Activated T-helper 2 cell treated with anti-CD3 and anti-CD28 coated beads, Interferon-gamma antibody, Interleukin-2, Interleukin-4, amounts not matched to agents 10 μg/mL and 5 μg/mL and 100 μg/mL, durations not matched to agents 14 hours and 24 hours and 36 hours (primary cell): ENCODE measurements at regions of chr16 and their contacts with region 1.

Region 1: GRCh38 chr16:71894921-71895678 is at the start of gene IST1:
- DNase-seq: peak; percentile 97
- H3K4me3 Mint-ChIP-seq: peak within 1 kb of the TSS; percentile 95
- H3K27ac Mint-ChIP-seq: peak within 1 kb of the TSS; percentile 98
- H3K4me1 Mint-ChIP-seq: peaks cover 13% of the 10 kb centered on the region
- H3K27me3 Mint-ChIP-seq: no peaks in the 10 kb centered on the region
- total RNA-seq, gene IST1: 158 and 167 TPM in 2 replicates

Region 2: DNA sequence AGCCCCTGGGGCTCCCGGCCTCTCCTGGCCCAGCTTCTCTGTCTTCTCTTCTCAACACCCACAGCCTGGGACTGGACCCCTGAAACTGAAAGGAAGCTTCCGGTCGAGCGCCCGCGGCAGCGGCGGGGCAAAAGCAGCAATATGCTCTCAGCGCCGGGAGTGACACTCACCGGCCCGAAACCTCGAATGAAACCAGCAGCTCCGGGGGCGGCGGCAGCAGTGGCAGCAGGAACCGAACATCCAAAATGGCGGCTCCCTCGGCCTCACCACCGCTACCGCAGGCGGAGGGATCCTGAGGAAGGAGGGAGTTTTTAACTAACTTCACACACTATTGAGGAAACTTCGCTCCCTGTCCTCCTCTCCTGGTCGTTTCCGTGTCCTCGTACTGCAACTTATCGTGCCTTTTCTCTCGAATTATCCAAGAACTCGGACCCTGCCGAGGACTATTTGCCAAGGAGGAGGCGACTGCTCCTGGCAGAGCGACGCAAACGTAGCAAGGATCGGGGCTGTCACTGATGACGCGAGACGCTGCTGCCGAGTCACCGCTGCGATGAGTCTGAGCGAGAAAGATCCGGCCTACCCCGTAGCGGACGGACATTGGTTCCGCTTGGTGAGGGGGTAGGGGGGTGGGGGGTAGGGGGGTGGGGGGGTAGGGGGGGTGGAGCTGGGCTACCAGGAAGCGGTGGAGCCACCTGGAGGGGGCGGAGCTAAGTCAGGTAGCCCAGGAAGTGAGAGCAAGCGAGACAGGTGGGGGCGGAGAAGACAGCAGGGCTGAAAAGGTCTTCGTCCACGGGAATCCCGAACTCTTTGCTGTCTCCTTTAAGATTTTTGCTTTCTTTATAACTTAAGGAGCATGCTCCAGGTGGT is 86.3 kb before region 1 on chr16 and contains the start of gene AP1G1:
- intact Hi-C with region 1: loop called (anchors 1 kb)
- DNase-seq: peak; percentile 91
- H3K4me3 Mint-ChIP-seq: peak within 1 kb of the TSS; percentile 95
- H3K27ac Mint-ChIP-seq: peak within 1 kb of the TSS; percentile 100
- H3K4me1 Mint-ChIP-seq: peaks cover 16% of the 10 kb centered on the region
- H3K27me3 Mint-ChIP-seq: no peaks in the 10 kb centered on the region
- total RNA-seq, gene AP1G1: 90.6 and 91.6 TPM in 2 replicates

Region 3: GRCh38 chr16:71845639-71846430 is 49.3 kb before region 1 on chr16 and contains the start of gene ATXN1L:
- intact Hi-C with region 1: loop called (anchors 1 kb)
- DNase-seq: peak; percentile 92
- H3K4me3 Mint-ChIP-seq: peak within 1 kb of the TSS; percentile 89
- H3K27ac Mint-ChIP-seq: peak within 1 kb of the TSS; percentile 94
- H3K4me1 Mint-ChIP-seq: peaks cover 27% of the 10 kb centered on the region
- H3K27me3 Mint-ChIP-seq: no peaks in the 10 kb centered on the region
- total RNA-seq, gene ATXN1L: 17.2 and 19.7 TPM in 2 replicates

Region 4: DNA sequence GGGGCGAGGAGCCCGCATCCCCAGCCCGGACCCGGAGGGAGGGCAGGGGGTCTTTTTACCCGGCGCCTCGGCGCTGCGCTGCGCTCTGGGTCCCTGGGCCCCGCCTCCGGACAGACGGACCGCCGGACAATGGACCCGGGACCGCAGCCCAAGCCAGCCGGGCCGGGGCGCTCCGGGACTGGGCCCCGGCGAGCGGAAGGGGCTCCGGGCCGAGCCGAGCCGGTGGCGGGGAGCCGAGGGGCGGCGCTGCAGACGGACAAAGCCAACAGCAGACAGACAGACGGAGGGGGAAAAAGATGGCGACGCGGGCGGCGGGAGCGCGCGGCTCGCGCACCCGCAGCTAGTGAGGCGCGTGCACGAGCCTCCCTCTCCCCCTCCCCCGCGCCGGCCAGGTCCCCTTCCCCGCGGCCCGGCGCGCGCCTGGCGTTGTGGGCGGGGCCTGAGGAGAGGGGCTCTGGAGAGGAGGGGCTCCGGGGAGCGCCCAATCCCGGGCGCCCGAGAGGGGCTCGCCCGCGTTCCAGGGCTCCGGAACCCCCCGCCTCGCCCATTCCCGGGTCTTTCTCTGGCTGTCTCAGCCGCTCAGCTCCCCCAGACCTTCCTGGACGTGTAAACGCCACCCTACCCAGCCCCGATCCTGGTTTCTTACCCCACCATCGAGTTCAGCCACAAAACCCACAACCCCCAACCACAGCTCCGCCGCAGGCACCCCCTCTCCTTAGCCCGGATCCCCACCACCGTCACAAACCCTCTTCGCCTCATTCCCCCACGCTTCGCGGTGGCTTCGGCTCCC is 11.1 kb before region 1 on chr16 and contains the start of gene ZNF821:
- intact Hi-C with region 1: loop called (anchors 1 kb)
- DNase-seq: peak; percentile 68
- H3K4me3 Mint-ChIP-seq: peak within 1 kb of the TSS; percentile 96
- H3K27ac Mint-ChIP-seq: peak within 1 kb of the TSS; percentile 95
- H3K4me1 Mint-ChIP-seq: peaks cover 45% of the 10 kb centered on the region
- H3K27me3 Mint-ChIP-seq: peaks cover 9% of the 10 kb centered on the region
- total RNA-seq, gene ZNF821: 7.9 and 9.2 TPM in 2 replicates

Region 5: DNA sequence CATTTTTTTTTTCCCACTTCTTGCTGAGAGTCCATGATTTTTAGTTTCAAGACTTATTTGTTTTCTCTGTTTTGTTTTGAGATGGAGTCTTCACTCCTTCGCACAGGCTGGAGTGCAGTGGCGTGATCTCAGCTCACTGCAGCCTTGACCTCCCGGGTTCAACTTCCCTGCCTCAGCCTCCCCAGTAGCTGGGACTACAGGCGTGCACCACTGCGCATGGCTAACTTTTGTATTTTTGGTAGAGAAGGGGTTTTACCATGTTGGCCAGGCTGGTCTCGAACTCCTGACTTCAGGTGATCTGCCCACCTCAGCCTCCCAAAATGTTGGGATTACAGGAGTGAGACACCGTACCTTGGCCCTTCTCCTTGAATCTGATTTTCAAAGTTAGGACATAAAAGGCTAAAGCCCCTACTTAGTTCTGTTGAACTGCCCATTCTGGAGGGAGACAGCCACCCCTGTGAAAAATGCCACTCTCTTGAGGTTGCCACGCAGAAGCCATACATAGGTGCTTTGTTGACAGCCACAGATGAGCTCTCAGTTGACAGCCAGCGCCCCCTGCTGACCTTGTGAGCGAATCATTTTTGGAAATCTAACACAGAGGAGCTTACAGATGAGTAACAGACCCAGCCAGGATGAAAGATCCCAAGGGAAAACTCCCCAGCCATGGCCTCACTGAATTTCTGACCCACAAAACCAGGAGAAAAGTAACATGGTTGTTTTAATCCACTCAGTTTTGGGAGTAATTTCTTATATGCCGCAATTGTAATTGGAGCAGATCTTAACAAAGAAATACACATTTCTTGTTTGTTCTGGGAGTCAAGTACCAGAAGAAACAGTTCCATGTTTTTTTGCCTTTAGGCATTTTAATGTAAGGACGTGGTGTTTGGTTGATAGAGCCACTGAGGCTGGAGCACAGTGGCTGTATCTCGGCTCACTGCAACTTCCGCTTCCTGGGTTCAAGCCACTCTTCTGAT is 66.3 kb after region 1 on chr16:
- intact Hi-C with region 1: loop called (anchors 5 kb)
- DNase-seq: peak; percentile 67
- H3K4me3 Mint-ChIP-seq: no peak overlapping the region
- H3K27ac Mint-ChIP-seq: no peak overlapping the region
- H3K4me1 Mint-ChIP-seq: peaks cover 18% of the 10 kb centered on the region
- H3K27me3 Mint-ChIP-seq: peaks cover 4% of the 10 kb centered on the region

Region 6: DNA sequence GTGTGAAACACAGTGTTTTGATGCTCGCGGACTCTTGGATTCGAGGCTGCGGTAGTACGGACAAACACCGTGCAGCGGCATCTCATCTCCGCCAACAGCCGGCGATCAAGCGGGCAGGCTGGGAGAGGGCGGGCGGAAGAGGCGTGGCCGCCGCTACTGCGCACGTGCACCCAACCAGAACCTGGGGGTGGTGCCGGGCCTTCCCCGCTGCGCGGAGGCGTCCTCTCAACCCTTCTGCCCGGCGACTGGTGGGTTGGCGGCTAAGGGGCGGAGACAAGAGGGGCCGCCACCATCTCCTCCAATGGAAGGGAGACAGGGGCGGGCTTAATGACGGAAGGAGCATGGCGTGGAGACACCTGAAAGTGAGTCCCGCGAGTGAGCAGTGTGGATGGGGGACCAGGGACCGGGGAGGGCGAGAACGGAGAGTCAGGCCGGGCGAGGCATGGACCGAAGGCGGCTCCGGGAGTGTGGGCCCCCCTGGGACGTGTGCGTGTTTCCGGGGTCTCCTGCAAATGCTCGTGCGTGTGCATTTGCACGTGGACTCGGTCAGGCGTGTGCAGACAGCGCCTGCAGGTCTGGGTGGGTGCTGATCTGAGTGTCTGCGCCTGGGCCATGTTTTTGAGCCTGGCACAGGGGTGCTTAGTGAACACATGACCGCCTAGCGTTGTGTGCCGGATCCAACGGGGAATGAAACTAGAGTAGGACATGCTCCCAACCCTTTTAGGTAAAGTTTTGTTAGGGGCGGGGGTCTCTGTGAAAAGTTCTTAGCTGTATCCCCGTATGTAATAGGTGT is 113.5 kb after region 1 on chr16 and contains the start of gene DHODH:
- intact Hi-C with region 1: loop called (anchors 1 kb)
- DNase-seq: peak; percentile 98
- H3K4me3 Mint-ChIP-seq: peak within 1 kb of the TSS; percentile 95
- H3K27ac Mint-ChIP-seq: peak within 1 kb of the TSS; percentile 90
- H3K4me1 Mint-ChIP-seq: peaks cover 17% of the 10 kb centered on the region
- H3K27me3 Mint-ChIP-seq: no peaks in the 10 kb centered on the region
- total RNA-seq, gene DHODH: 26.7 and 27.1 TPM in 2 replicates